Activated CD8-positive, alpha-beta T cell treated with anti-CD3 and anti-CD28 coated beads, Interleukin-2, amount 10 ng/mL, durations not matched to agents 7 days and 5 days (primary cell): ENCODE measurements at regions of chr1 and their contacts with region 1.

Region 1: GRCh38 chr1:30779294-30780071 is 21.9 kb upstream of the LAPTM5 start:
- DNase-seq: peak; percentile 94
- ATAC-seq: peak; percentile 95
- H3K4me3 Mint-ChIP-seq: no peak overlapping the region
- H3K27ac Mint-ChIP-seq: no peak overlapping the region
- H3K4me1 Mint-ChIP-seq: peaks cover 18% of the 10 kb centered on the region
- H3K27me3 Mint-ChIP-seq: no peaks in the 10 kb centered on the region

Region 2: GRCh38 chr1:30732277-30732996 is 47.0 kb before region 1 on chr1:
- CTCF ChIA-PET with region 1: interaction called, 532 read pairs
- POLR2A ChIA-PET with region 1: interaction called, 3 read pairs
- DNase-seq: no peak
- ATAC-seq: no peak
- H3K4me3 Mint-ChIP-seq: no peak overlapping the region
- H3K27ac Mint-ChIP-seq: peak overlapping the region; percentile 58
- H3K4me1 Mint-ChIP-seq: peaks cover 31% of the 10 kb centered on the region
- H3K27me3 Mint-ChIP-seq: no peaks in the 10 kb centered on the region

Region 3: GRCh38 chr1:30743584-30744059 is 35.9 kb before region 1 on chr1:
- CTCF ChIA-PET with region 1: interaction called, 53 read pairs
- POLR2A ChIA-PET with region 1: interaction called, 3 read pairs
- DNase-seq: peak; percentile 89
- ATAC-seq: peak; percentile 77
- H3K4me3 Mint-ChIP-seq: peak overlapping the region; percentile 65
- H3K27ac Mint-ChIP-seq: peak overlapping the region; percentile 89
- H3K4me1 Mint-ChIP-seq: peaks cover 98% of the 10 kb centered on the region
- H3K27me3 Mint-ChIP-seq: no peaks in the 10 kb centered on the region

Region 4: DNA sequence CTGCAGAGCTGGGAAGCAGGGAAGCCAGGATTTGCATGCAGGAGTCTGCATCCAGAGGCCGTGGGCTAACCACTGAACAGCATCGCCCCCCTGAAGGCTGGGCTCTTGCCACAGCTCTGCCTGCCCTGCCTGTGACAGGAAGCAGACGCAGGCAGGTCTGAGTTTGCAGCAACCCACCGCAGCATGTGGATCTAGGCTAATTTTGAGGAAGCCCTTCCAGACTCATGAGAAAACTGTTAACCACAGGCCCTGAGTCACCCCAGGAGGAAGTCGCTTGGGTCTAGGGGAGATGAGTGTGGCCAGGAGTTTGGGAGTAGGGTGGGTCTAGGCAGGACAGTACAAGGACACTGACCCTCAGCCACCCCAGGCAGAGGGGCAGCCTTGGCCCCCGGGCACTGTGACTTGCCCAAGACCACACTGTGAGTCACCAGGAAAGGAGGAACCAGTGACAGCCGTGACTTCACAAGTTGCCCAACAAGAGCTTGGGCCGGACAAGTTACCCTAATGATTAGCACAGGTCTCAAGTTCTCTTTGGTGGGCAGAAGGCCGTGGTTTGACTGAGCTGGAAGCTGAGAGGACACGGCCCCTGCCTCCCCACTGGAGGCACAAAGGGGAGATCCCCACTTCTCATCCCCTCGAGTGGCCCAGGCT is 22.8 kb before region 1 on chr1:
- CTCF ChIA-PET with region 1: interaction called, 139 read pairs
- POLR2A ChIA-PET with region 1: interaction called, 4 read pairs
- DNase-seq: peak; percentile 84
- ATAC-seq: peak; percentile 56
- H3K4me3 Mint-ChIP-seq: peak overlapping the region; percentile 96
- H3K27ac Mint-ChIP-seq: peak overlapping the region; percentile 96
- H3K4me1 Mint-ChIP-seq: peaks cover 81% of the 10 kb centered on the region
- H3K27me3 Mint-ChIP-seq: no peaks in the 10 kb centered on the region

Region 5: GRCh38 chr1:30768830-30769718 is 10.4 kb before region 1 on chr1:
- CTCF ChIA-PET with region 1: interaction called, 139 read pairs
- POLR2A ChIA-PET with region 1: interaction called, 3 read pairs
- DNase-seq: no peak
- ATAC-seq: no peak
- H3K4me3 Mint-ChIP-seq: no peak overlapping the region
- H3K27ac Mint-ChIP-seq: peak overlapping the region; percentile 45
- H3K4me1 Mint-ChIP-seq: peaks cover 37% of the 10 kb centered on the region
- H3K27me3 Mint-ChIP-seq: no peaks in the 10 kb centered on the region

Region 6: GRCh38 chr1:30801771-30802198 is 22.3 kb after region 1 on chr1:
- CTCF ChIA-PET with region 1: interaction called, 18 read pairs
- POLR2A ChIA-PET with region 1: no interaction called
- DNase-seq: peak; percentile 83
- ATAC-seq: peak; percentile 81
- H3K4me3 Mint-ChIP-seq: no peak overlapping the region
- H3K27ac Mint-ChIP-seq: no peak overlapping the region
- H3K4me1 Mint-ChIP-seq: peaks cover 7% of the 10 kb centered on the region
- H3K27me3 Mint-ChIP-seq: peaks cover 44% of the 10 kb centered on the region

Region 7: GRCh38 chr1:30830537-30830936 is 51.1 kb after region 1 on chr1:
- CTCF ChIA-PET with region 1: no interaction called
- POLR2A ChIA-PET with region 1: no interaction called
- DNase-seq: no peak
- ATAC-seq: no peak
- H3K4me3 Mint-ChIP-seq: no peak overlapping the region
- H3K27ac Mint-ChIP-seq: no peak overlapping the region
- H3K4me1 Mint-ChIP-seq: no peaks in the 10 kb centered on the region
- H3K27me3 Mint-ChIP-seq: peaks cover 58% of the 10 kb centered on the region

Region 8: GRCh38 chr1:30847358-30847972 is 68.0 kb after region 1 on chr1:
- CTCF ChIA-PET with region 1: no interaction called
- POLR2A ChIA-PET with region 1: no interaction called
- DNase-seq: no peak
- ATAC-seq: no peak
- H3K4me3 Mint-ChIP-seq: no peak overlapping the region
- H3K27ac Mint-ChIP-seq: no peak overlapping the region
- H3K4me1 Mint-ChIP-seq: no peaks in the 10 kb centered on the region
- H3K27me3 Mint-ChIP-seq: peaks cover 54% of the 10 kb centered on the region

Region 9: DNA sequence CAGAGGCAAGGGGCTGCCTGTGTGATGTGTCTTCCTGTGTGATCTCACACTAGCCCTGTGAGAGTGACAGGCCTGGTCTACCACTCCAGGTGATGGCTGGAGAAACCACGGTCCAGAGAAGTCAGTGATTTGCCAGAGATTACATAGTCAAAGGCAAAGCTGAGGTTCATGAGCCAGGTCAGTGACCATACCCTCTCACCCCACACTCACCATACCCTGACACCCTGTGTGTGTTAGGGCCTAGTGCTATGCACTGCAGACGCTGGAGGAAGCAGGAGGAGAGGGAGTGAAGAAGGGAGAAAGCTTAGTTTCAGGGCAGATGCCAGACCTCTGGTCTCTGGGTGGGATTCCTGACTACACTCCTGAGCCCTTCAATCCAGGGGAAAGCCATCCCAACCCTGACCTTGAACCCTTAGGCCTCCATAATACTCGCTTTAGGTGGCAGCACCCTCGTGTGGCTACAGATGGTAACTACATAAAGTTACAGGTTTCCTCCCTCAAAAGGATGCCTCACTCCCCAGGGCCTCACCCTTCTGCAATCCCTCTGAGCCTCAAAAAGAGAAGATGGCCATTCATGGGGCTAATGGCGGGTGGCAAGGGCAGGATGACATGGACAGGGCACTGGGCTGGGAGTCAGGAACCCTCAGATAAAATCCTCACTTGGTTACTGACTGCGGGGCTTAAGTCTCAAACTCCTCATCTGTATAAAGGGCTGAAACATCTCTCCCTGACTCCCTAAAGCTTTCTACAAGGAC is 149.8 kb after region 1 on chr1:
- CTCF ChIA-PET with region 1: interaction called, 18 read pairs
- POLR2A ChIA-PET with region 1: no interaction called
- DNase-seq: peak; percentile 68
- ATAC-seq: peak; percentile 76
- H3K4me3 Mint-ChIP-seq: no peak overlapping the region
- H3K27ac Mint-ChIP-seq: peak overlapping the region; percentile 55
- H3K4me1 Mint-ChIP-seq: peaks cover 8% of the 10 kb centered on the region
- H3K27me3 Mint-ChIP-seq: no peaks in the 10 kb centered on the region